ENCODE measurements at regions of chr16 and their contacts with region 1.

Region 1: GRCh38 chr16:2459647-2460390 is at the start of gene TEDC2:
- DNase-seq: peak; percentile 97
- H3K4me3 Mint-ChIP-seq: peak within 1 kb of the TSS; percentile 64
- H3K27ac Mint-ChIP-seq: peak within 1 kb of the TSS; percentile 73
- H3K4me1 Mint-ChIP-seq: peaks cover 18% of the 10 kb centered on the region
- H3K27me3 Mint-ChIP-seq: no peaks in the 10 kb centered on the region
- total RNA-seq, gene TEDC2: 12.5 to 13.9 TPM

Region 2: DNA sequence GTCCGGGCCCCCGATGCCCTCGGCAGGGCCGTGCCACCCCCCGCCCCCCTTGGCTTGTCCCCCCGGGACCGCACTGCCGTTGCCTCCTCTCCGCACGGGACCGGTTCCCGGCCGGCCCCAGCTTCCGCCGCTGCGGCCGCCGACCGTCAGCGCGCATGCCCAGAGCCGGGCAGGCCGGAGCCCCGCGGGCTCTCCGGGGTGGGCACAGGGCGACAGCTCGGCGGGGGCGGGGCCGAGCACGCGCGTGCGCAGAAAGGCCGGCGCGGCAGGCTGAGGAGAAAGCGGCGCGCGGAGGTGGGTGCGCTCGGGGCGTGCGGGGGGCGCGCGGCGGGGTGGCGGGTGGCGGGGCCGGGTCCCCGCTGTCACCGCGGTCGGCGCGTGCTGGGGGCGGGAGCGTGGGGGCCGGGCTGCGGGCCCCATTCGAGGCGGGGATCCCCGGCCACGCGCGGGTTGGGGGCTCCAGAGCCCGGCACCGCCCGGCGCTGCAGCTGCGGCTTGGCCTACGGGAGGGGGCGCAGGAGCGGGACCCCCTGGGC is 15.1 kb after region 1 on chr16 and contains the start of gene TBC1D24:
- CTCF ChIA-PET with region 1: interaction called, 5 read pairs
- POLR2A ChIA-PET with region 1: interaction called, 27 read pairs
- DNase-seq: peak; percentile 83
- H3K4me3 Mint-ChIP-seq: peak within 1 kb of the TSS; percentile 77
- H3K27ac Mint-ChIP-seq: peak within 1 kb of the TSS; percentile 59
- H3K4me1 Mint-ChIP-seq: peaks cover 20% of the 10 kb centered on the region
- H3K27me3 Mint-ChIP-seq: peaks cover 23% of the 10 kb centered on the region
- total RNA-seq, gene TBC1D24: 11.4 to 13.7 TPM

Region 3: GRCh38 chr16:2492292-2492691 is 32.5 kb after region 1 on chr16:
- CTCF ChIA-PET with region 1: no interaction called
- POLR2A ChIA-PET with region 1: no interaction called
- DNase-seq: no peak
- H3K4me3 Mint-ChIP-seq: no peak overlapping the region
- H3K27ac Mint-ChIP-seq: no peak overlapping the region
- H3K4me1 Mint-ChIP-seq: peaks cover 7% of the 10 kb centered on the region
- H3K27me3 Mint-ChIP-seq: no peaks in the 10 kb centered on the region